ENCODE measurements at regions of chr22 and their contacts with region 1.

Region 1: DNA sequence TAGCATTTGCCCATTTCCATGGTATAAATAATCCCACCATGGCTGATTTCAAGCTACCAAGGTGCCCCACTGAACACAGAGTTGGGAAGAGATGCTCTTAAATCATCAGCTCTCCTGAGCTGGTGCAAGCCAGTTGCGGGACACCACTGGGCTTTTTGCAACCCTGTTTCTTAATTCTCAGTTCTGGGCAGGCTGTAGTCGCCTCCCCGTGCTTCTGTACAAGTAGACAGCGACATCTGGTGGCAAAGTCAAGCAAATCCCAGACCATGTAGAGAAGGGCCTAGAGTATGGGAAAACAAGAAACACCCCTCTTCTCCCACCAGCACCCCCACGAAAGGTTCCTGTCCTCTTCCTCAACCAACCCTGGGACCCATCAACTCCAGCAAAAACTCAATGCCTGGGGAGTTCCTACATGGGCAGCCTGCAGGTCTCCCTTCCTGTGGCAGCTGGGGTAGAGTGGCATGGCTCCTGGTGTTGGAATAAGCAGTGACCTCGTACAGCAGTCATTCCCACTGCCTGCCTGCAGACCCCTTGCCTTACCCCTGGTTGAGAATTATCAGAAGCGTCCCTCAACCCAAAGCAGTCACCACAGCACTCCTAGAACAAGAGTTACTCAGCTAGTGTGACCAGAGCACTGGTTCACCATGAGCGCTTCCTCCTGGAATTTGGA is 68.4 kb downstream of the IGLL5 start:
- DNase-seq: peak in 2 of 4 donors; percentile 63 to 77
- ATAC-seq: peak; percentile 94
- H3K4me3 ChIP-seq: no peak overlapping the region
- H3K27ac ChIP-seq: no peak overlapping the region
- H3K4me1 ChIP-seq: no peaks in the 10 kb centered on the region
- H3K27me3 ChIP-seq: peaks cover 12 to 62% of the 10 kb centered on the region in 2 donors
- CTCF ChIP-seq: peak; percentile 84 to 85

Region 2: GRCh38 chr22:22728382-22728781 is 227.6 kb before region 1 on chr22:
- intact Hi-C with region 1: no loop called
- DNase-seq: no peak
- ATAC-seq: no peak
- H3K4me3 ChIP-seq: no peak overlapping the region
- H3K27ac ChIP-seq: no peak overlapping the region
- H3K4me1 ChIP-seq: no peaks in the 10 kb centered on the region
- H3K27me3 ChIP-seq: no peaks in the 10 kb centered on the region
- CTCF ChIP-seq: no peak

Region 3: DNA sequence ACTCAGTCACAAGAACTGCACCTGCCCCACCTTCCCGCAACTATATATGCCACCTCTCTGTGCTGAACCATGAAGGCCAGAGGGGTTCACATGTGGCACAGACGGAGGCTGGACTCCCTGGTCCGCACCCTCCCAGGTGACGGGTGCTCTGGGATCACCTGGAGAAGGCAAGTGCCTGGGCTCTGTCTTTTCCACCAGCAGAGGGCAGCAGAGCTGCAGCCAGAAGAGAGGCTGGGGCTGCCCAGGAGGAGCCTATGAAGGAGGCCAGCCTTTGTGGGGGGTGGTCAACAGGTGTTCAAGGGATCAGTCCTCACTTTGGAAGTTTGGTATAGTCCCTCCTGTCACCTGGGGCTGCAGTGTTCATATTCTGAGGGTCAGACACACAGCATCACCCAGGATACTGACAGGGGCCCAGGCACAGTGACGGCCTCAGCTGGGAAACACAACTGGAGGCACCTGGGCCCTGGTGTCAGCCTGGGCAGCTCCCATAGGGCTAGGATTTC is 107.6 kb before region 1 on chr22:
- intact Hi-C with region 1: no loop called
- DNase-seq: peak in 3 of 4 donors; percentile 59 to 82 (median 62)
- ATAC-seq: peak; percentile 97
- H3K4me3 ChIP-seq: no peak overlapping the region
- H3K27ac ChIP-seq: no peak overlapping the region
- H3K4me1 ChIP-seq: no peaks in the 10 kb centered on the region
- H3K27me3 ChIP-seq: peaks cover 3 to 29% of the 10 kb centered on the region in 2 donors
- CTCF ChIP-seq: peak; percentile 78 to 86

Region 4: DNA sequence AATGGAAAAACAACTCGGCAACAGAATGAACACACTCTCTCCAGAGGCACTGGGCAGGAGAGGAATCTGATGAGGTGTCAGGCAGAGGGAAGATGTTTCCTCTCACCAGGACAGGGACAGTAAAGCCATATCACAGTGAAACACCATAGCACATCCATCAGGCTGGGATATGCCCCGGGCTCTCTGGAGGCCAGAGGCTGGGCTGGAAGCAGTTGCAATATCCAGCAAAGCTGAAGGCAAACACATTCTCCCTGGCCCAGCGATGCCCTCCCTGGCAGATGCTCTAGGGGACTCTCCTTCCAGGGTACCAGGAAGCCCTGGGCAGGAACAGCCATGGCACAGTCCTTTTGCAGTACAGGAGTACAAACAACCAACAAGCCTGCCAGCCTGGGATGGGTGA is 174.7 kb after region 1 on chr22:
- intact Hi-C with region 1: loop called in 1 of 2 experiments (anchors 2 kb)
- DNase-seq: peak in 1 of 4 donors; percentile 34
- ATAC-seq: no peak
- H3K4me3 ChIP-seq: no peak overlapping the region
- H3K27ac ChIP-seq: no peak overlapping the region
- H3K4me1 ChIP-seq: no peaks in the 10 kb centered on the region
- H3K27me3 ChIP-seq: no peaks in the 10 kb centered on the region
- CTCF ChIP-seq: no peak

Region 5: GRCh38 chr22:23192181-23192957 is 236.4 kb after region 1 on chr22:
- intact Hi-C with region 1: no loop called
- DNase-seq: peak in 2 of 4 donors; percentile 78 to 81
- ATAC-seq: peak; percentile 91
- H3K4me3 ChIP-seq: no peak overlapping the region
- H3K27ac ChIP-seq: peak overlapping the region; percentile 7 to 36
- H3K4me1 ChIP-seq: peaks cover 12 to 26% of the 10 kb centered on the region in 2 donors
- H3K27me3 ChIP-seq: no peaks in the 10 kb centered on the region
- CTCF ChIP-seq: no peak

Measured in left lung (tissue), 14 donors.